WTC11 (cell line): ENCODE measurements at regions of chr20 and their contacts with region 1.

Region 1: DNA sequence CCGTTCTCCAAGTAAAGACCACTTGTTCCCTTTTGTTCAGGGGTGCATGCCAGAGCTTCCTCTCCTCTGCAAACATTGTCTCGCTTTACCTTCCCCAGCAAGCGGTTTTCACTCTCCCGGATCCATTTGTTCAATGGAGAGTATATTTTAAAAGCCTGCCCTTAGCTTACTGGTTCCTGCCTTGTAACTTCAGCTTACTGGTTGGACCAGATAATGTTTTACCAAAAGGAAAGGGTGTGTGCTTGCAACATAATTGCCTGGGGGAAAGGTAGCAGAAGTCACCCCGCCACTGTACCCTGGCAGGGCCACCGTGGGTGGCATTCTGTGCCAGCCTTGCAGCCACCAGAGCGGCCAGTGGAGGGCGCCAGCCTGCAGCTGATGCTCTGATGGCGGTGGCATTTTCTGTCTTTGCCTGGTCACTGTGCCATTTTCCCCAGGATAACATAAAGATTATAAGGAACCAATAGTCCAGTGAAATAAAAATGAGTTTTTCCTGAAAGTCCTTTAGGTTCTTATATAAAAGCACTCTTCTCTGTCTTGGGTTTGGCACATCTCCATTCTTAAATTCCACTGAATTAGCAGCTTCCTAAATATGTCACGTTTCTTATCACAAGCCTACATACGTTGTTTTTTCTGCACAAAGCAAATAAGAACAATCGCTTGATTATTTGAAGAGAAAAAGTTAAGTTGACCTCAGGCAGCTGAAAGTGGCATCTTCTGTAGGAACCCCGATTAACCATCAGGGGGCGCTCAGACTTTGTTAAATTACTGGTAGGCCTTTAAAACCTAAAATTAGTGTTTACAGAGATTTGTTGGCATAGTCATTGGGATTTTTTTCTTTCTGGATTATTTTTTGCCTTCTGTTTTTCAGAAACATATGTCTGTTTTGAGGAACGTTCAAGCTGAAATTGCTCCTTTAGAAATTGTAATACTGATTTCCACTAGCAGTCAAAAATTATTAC is 67.4 kb upstream of the XRN2 start:
- DNase-seq: peak; percentile 76
- ATAC-seq: peak; percentile 82
- H3K4me3 Mint-ChIP-seq: peak overlapping the region; percentile 54
- H3K27ac Mint-ChIP-seq: no peak overlapping the region; the same call in 1 of the 2 replicates
- H3K4me1 Mint-ChIP-seq: peaks cover 33% of the 10 kb centered on the region
- H3K27me3 Mint-ChIP-seq: no peaks in the 10 kb centered on the region
- CTCF ChIP-seq: peak; percentile 93

Region 2: DNA sequence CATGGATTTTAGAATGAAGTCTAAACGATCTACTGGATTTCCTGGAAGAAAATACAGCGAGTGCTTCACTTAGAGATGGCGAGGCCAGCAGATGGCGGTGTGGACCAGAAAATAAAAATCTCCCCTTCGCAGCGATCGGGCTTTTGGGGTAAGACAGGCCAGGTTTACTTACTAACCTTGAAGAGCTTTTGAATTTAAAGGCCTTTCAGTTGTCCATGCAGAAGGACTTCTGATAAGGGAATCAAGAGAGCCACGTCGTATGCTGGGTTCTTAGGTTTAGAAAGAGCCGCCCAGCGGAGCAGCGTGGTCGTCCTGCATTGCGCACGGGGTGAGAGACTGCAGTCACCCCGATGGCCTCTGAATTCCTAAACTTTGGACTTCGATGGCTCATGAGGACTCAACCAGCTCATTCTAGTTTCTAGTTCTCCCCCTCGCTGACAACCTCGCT is 398.2 kb before region 1 on chr20:
- CTCF ChIA-PET with region 1: interaction called, 15 read pairs
- POLR2A ChIA-PET with region 1: no interaction called
- DNase-seq: peak; percentile 68
- ATAC-seq: peak; percentile 78
- H3K4me3 Mint-ChIP-seq: peak overlapping the region; percentile 46
- H3K27ac Mint-ChIP-seq: no peak overlapping the region
- H3K4me1 Mint-ChIP-seq: peaks cover 6% of the 10 kb centered on the region; the same call in 1 of the 2 replicates
- H3K27me3 Mint-ChIP-seq: peaks cover 3% of the 10 kb centered on the region
- CTCF ChIP-seq: peak; percentile 67

Region 3: GRCh38 chr20:21027569-21027968 is 208.2 kb before region 1 on chr20:
- CTCF ChIA-PET with region 1: interaction called, 10 read pairs
- POLR2A ChIA-PET with region 1: no interaction called
- DNase-seq: peak; percentile 69
- ATAC-seq: peak; percentile 99
- H3K4me3 Mint-ChIP-seq: no peak overlapping the region
- H3K27ac Mint-ChIP-seq: no peak overlapping the region
- H3K4me1 Mint-ChIP-seq: peaks cover 2% of the 10 kb centered on the region; the same call in 1 of the 2 replicates
- H3K27me3 Mint-ChIP-seq: no peaks in the 10 kb centered on the region; the same call in 1 of the 2 replicates
- CTCF ChIP-seq: no peak

Region 4: GRCh38 chr20:21179796-21180195 is 56.0 kb before region 1 on chr20:
- CTCF ChIA-PET with region 1: interaction called, 12 read pairs
- POLR2A ChIA-PET with region 1: no interaction called
- DNase-seq: no peak
- ATAC-seq: no peak
- H3K4me3 Mint-ChIP-seq: no peak overlapping the region
- H3K27ac Mint-ChIP-seq: peak overlapping the region; percentile 79
- H3K4me1 Mint-ChIP-seq: peaks cover 46% of the 10 kb centered on the region
- H3K27me3 Mint-ChIP-seq: no peaks in the 10 kb centered on the region
- CTCF ChIP-seq: no peak

Region 5: DNA sequence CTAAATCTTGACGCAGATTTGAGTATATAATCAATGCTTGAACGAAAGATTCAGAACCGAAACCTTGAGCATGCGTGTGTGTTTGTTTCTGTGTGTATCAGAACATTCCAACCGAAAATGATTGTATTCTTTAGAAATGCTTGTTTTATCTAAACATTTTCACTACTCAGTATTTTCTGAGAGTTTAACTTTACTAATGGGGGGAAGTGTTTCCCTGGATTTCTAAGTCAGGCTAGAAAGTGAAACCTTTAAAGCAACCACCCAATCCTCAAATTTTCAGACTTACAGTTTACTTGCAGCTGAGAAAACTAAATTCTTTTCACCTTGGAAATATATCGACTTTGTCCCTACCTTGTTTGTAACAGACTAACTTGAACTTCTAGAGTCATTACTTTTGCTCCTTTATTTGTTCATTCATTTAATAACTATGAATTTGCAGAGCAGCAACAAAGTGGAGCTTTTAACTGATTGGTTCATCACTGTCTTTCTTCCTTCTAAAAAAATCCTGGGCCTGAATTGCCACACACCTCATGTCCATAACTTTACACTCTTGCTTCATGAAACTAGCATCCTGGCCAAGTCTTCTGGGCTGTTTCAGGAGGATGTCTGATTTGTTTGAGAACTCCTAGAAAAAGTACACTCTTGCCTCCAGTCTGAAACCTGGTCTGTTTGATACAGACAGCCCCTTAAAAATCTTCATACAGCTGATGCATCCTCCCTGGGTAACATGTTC is 10.4 kb before region 1 on chr20:
- CTCF ChIA-PET with region 1: interaction called, 28 read pairs
- POLR2A ChIA-PET with region 1: no interaction called
- DNase-seq: no peak
- ATAC-seq: no peak
- H3K4me3 Mint-ChIP-seq: no peak overlapping the region
- H3K27ac Mint-ChIP-seq: peak overlapping the region; percentile 76
- H3K4me1 Mint-ChIP-seq: peaks cover 45% of the 10 kb centered on the region
- H3K27me3 Mint-ChIP-seq: no peaks in the 10 kb centered on the region
- CTCF ChIP-seq: no peak

Region 6: GRCh38 chr20:21352703-21353102 is 116.9 kb after region 1 on chr20:
- CTCF ChIA-PET with region 1: interaction called, 11 read pairs
- POLR2A ChIA-PET with region 1: no interaction called
- DNase-seq: no peak
- ATAC-seq: no peak
- H3K4me3 Mint-ChIP-seq: no peak overlapping the region
- H3K27ac Mint-ChIP-seq: no peak overlapping the region
- H3K4me1 Mint-ChIP-seq: no peaks in the 10 kb centered on the region
- H3K27me3 Mint-ChIP-seq: no peaks in the 10 kb centered on the region
- CTCF ChIP-seq: no peak

Region 7: GRCh38 chr20:21498635-21499034 is 262.9 kb after region 1 on chr20:
- CTCF ChIA-PET with region 1: interaction called, 14 read pairs
- POLR2A ChIA-PET with region 1: no interaction called
- DNase-seq: no peak
- ATAC-seq: no peak; the same call in 1 of the 2 replicates
- H3K4me3 Mint-ChIP-seq: no peak overlapping the region
- H3K27ac Mint-ChIP-seq: no peak overlapping the region
- H3K4me1 Mint-ChIP-seq: peaks cover 28% of the 10 kb centered on the region
- H3K27me3 Mint-ChIP-seq: peaks cover 10% of the 10 kb centered on the region; the same call in 1 of the 2 replicates
- CTCF ChIP-seq: no peak